ENCODE measurements at regions of chr16 and their contacts with region 1.

Region 1: GRCh38 chr16:81723098-81723723 is 55.9 kb upstream of the PLCG2 start:
- DNase-seq: peak; percentile 86
- ATAC-seq: peak; percentile 91
- H3K4me3 ChIP-seq: no peak overlapping the region
- H3K27ac ChIP-seq: no peak overlapping the region
- H3K4me1 ChIP-seq: 0 out of 2 replicates have a peak, but pooled peaks cover 5% of the 10 kb centered on the region
- H3K27me3 ChIP-seq: peaks cover 0 to 24% of the 10 kb centered on the region in 2 experiments; a peak in 4 of 5 replicates
- CTCF ChIP-seq: peak; percentile 92
- EP300 ChIP-seq: no peak
- POLR2A ChIP-seq: no peak
- RAD21 ChIP-seq: peak; percentile 80

Region 2: GRCh38 chr16:81204798-81205680 is 518.2 kb before region 1 on chr16:
- CTCF ChIA-PET with region 1: no interaction called
- POLR2A ChIA-PET with region 1: no interaction called
- in situ Hi-C with region 1: no loop called
- intact Hi-C with region 1: loop called (anchors 5 kb)
- DNase-seq: peak; percentile 61
- ATAC-seq: peak; percentile 60
- H3K4me3 ChIP-seq: no peak overlapping the region
- H3K27ac ChIP-seq: no peak overlapping the region
- H3K4me1 ChIP-seq: no peaks in the 10 kb centered on the region
- H3K27me3 ChIP-seq: peaks cover 7 to 49% of the 10 kb centered on the region in 2 experiments; a peak in 4 of 5 replicates
- CTCF ChIP-seq: peak; percentile 67
- EP300 ChIP-seq: no peak
- POLR2A ChIP-seq: no peak
- RAD21 ChIP-seq: peak; percentile 24; the same call in 1 of the 2 replicates

Region 3: GRCh38 chr16:81261049-81261648 is 462.1 kb before region 1 on chr16:
- CTCF ChIA-PET with region 1: no interaction called
- POLR2A ChIA-PET with region 1: no interaction called
- in situ Hi-C with region 1: no loop called
- intact Hi-C with region 1: loop called (anchors 5 kb)
- DNase-seq: peak; percentile 36
- ATAC-seq: peak; percentile 74
- H3K4me3 ChIP-seq: no peak overlapping the region
- H3K27ac ChIP-seq: no peak overlapping the region
- H3K4me1 ChIP-seq: no peaks in the 10 kb centered on the region
- H3K27me3 ChIP-seq: 0 out of 5 replicates have a peak, but pooled peaks cover 0 to 5% of the 10 kb centered on the region in 2 experiments
- CTCF ChIP-seq: peak; percentile 59
- EP300 ChIP-seq: no peak
- POLR2A ChIP-seq: no peak
- RAD21 ChIP-seq: no peak

Region 4: GRCh38 chr16:81366316-81366932 is 356.8 kb before region 1 on chr16:
- CTCF ChIA-PET with region 1: interaction called, 27 read pairs
- POLR2A ChIA-PET with region 1: no interaction called
- in situ Hi-C with region 1: no loop called
- intact Hi-C with region 1: loop called (anchors 1 kb)
- DNase-seq: peak; percentile 38
- ATAC-seq: peak; percentile 72
- H3K4me3 ChIP-seq: no peak overlapping the region
- H3K27ac ChIP-seq: no peak overlapping the region
- H3K4me1 ChIP-seq: no peaks in the 10 kb centered on the region
- H3K27me3 ChIP-seq: no peaks in the 10 kb centered on the region
- CTCF ChIP-seq: peak; percentile 71
- EP300 ChIP-seq: no peak
- POLR2A ChIP-seq: no peak
- RAD21 ChIP-seq: peak; percentile 67

Region 5: GRCh38 chr16:81623363-81624102 is 99.7 kb before region 1 on chr16:
- CTCF ChIA-PET with region 1: interaction called, 5 read pairs
- POLR2A ChIA-PET with region 1: no interaction called
- in situ Hi-C with region 1: loop called (anchors 5 kb)
- intact Hi-C with region 1: loop called (anchors 1 kb)
- DNase-seq: peak; percentile 50
- ATAC-seq: peak; percentile 14; the same call in 2 of the 3 replicates
- H3K4me3 ChIP-seq: no peak overlapping the region
- H3K27ac ChIP-seq: peak overlapping the region; percentile 82
- H3K4me1 ChIP-seq: peaks cover 37% of the 10 kb centered on the region
- H3K27me3 ChIP-seq: no peaks in the 10 kb centered on the region
- CTCF ChIP-seq: peak; percentile 83
- EP300 ChIP-seq: no peak
- POLR2A ChIP-seq: no peak
- RAD21 ChIP-seq: peak; percentile 21; the same call in 1 of the 2 replicates

Region 6: GRCh38 chr16:81686391-81687130 is 36.6 kb before region 1 on chr16:
- CTCF ChIA-PET with region 1: no interaction called
- POLR2A ChIA-PET with region 1: no interaction called
- in situ Hi-C with region 1: no loop called
- intact Hi-C with region 1: no loop called
- DNase-seq: no peak
- ATAC-seq: no peak; the same call in 2 of the 3 replicates
- H3K4me3 ChIP-seq: no peak overlapping the region
- H3K27ac ChIP-seq: no peak overlapping the region
- H3K4me1 ChIP-seq: no peaks in the 10 kb centered on the region
- H3K27me3 ChIP-seq: no peaks in the 10 kb centered on the region
- CTCF ChIP-seq: no peak
- EP300 ChIP-seq: no peak
- POLR2A ChIP-seq: no peak
- RAD21 ChIP-seq: no peak

Measured in HepG2 (cell line).